ENCODE measurements at regions of chr1 and their contacts with region 1.

Region 1: GRCh38 chr1:61049850-61050540 is 32.4 kb upstream of the NFIA start:
- DNase-seq: peak; percentile 91
- H3K4me3 ChIP-seq: peak overlapping the region; percentile 84 to 92
- H3K27ac ChIP-seq: peak overlapping the region; percentile 54 to 92
- H3K4me1 ChIP-seq: peaks cover 0 to 6% of the 10 kb centered on the region in 2 experiments; a peak in 2 of 4 replicates
- H3K27me3 ChIP-seq: no peaks in the 10 kb centered on the region
- CTCF ChIP-seq: peak; percentile 94
- EP300 ChIP-seq: no peak; a peak in 1 of 4 replicates
- RAD21 ChIP-seq: peak; percentile 81

Region 2: GRCh38 chr1:59971464-59971911 is 1078.5 kb before region 1 on chr1:
- CTCF ChIA-PET with region 1: interaction called, 11 read pairs
- POLR2A ChIA-PET with region 1: no interaction called
- DNase-seq: peak; percentile 88
- H3K4me3 ChIP-seq: peak overlapping the region; percentile 13 to 42; a peak in 3 of 4 replicates
- H3K27ac ChIP-seq: no peak overlapping the region
- H3K4me1 ChIP-seq: peaks cover 0 to 5% of the 10 kb centered on the region in 2 experiments; a peak in 1 of 4 replicates
- H3K27me3 ChIP-seq: no peaks in the 10 kb centered on the region
- CTCF ChIP-seq: peak; percentile 96
- EP300 ChIP-seq: no peak
- RAD21 ChIP-seq: peak; percentile 93

Region 3: GRCh38 chr1:60969971-60970509 is 80.0 kb before region 1 on chr1:
- CTCF ChIA-PET with region 1: interaction called, 25 read pairs
- POLR2A ChIA-PET with region 1: no interaction called
- DNase-seq: peak; percentile 50
- H3K4me3 ChIP-seq: no peak overlapping the region
- H3K27ac ChIP-seq: peak overlapping the region; percentile 44 to 88
- H3K4me1 ChIP-seq: peaks cover 17 to 28% of the 10 kb centered on the region in 2 experiments
- H3K27me3 ChIP-seq: no peaks in the 10 kb centered on the region
- CTCF ChIP-seq: peak; percentile 57
- EP300 ChIP-seq: peak in 1 of 2 experiments; percentile 53; a peak in 1 of 4 replicates
- RAD21 ChIP-seq: peak; percentile 86

Region 4: GRCh38 chr1:60989749-60990713 is 60.0 kb before region 1 on chr1:
- CTCF ChIA-PET with region 1: interaction called, 15 read pairs
- POLR2A ChIA-PET with region 1: interaction called, 4 read pairs
- DNase-seq: peak; percentile 50
- H3K4me3 ChIP-seq: peak overlapping the region; percentile 6 to 21; a peak in 3 of 4 replicates
- H3K27ac ChIP-seq: peak overlapping the region; percentile 90 to 93
- H3K4me1 ChIP-seq: peaks cover 19 to 36% of the 10 kb centered on the region in 2 experiments; a peak in 3 of 4 replicates
- H3K27me3 ChIP-seq: no peaks in the 10 kb centered on the region
- CTCF ChIP-seq: no peak
- EP300 ChIP-seq: peak; percentile 8 to 77; a peak in 3 of 4 replicates
- RAD21 ChIP-seq: no peak

Region 5: DNA sequence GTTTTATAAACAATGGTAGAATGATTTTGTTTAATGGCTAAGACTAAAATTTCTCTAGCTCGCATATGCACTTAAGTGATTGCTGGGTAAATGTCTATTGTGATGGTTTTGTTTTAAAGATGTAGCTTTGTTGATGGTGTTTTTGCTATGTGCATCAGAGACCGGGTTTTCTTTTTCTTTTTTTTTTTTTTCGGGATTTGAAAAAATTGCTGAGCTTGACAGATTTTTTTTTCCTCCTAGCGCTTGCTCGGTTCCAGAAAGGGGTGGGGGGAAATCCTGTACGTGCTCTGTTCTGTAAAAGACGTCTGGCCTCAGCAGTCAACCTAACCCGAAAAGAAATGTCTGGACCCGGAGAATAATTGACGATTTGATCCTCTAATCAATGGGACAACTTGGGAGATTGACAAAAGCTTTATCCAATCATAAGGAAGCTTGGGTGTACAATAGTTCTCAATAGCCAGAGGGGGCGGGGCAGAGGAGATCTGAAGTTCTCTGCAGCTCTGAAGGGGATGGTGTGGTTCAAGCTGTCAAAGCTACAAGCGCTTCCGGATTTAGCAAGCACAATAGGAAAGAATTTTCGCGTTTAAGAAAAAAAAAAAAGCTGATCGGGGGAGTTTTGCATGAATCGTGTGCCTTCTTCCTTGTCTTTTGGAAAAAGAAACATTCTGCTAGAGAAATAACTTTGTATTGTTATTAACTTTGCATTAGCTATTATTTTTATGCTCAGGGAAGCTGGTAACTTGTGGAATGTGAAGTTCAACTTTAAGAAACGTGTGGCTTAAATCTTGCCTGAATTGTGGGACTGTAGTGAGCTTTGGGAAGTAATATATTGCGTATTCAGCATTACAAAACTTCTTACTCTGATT is 27.9 kb after region 1 on chr1:
- CTCF ChIA-PET with region 1: interaction called, 43 read pairs
- POLR2A ChIA-PET with region 1: interaction called, 14 read pairs
- DNase-seq: peak; percentile 85
- H3K4me3 ChIP-seq: peak overlapping the region; percentile 60 to 76
- H3K27ac ChIP-seq: peak overlapping the region; percentile 80 to 98
- H3K4me1 ChIP-seq: peaks cover 31 to 33% of the 10 kb centered on the region in 2 experiments
- H3K27me3 ChIP-seq: no peaks in the 10 kb centered on the region
- CTCF ChIP-seq: no peak
- EP300 ChIP-seq: no peak
- RAD21 ChIP-seq: no peak

Region 6: DNA sequence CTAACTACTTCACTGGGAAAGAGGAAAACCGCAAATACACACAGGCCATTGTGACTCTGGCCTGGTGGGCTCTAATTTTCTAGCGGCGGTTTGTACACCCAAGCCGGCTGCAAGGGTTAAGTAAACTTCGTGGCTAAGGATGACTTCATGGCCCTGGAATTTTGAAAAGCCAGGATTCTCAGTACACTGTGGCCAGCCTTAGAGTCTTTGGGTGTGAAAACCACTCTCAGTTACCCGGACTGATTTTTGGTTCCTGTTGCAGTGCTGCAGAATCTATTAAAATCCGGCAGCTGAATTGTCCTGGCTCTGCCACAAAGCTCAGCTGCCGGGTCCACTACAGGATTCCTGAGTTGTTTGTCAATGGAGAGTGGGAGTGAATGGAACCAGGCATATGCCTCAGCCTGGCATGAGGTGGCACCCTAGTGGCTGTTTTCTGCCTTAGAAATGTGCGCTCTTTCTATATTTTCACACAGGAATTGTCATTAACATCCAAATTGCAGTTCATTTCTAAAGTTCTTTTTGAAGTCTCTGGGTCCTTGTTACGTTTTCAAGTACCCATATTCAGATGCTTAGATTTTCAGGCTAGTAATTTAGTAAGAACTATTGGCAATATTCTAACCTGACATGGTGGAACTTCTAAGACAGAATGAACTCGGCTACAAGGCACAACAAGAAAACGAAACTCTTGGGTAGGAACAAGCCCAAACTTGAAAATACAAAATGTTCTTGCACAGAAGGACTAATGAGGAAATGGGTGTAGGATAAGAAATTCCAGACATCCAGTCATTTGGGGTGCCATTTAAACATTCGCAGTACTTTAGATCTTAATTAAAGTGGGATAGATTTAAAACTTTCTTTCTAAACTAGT is 288.2 kb after region 1 on chr1:
- CTCF ChIA-PET with region 1: interaction called, 24 read pairs
- POLR2A ChIA-PET with region 1: interaction called, 6 read pairs
- DNase-seq: peak; percentile 73
- H3K4me3 ChIP-seq: peak overlapping the region in 1 of 2 experiments; percentile 18; a peak in 1 of 4 replicates
- H3K27ac ChIP-seq: peak overlapping the region; percentile 59 to 61
- H3K4me1 ChIP-seq: peaks cover 16 to 25% of the 10 kb centered on the region in 2 experiments; a peak in 3 of 4 replicates
- H3K27me3 ChIP-seq: no peaks in the 10 kb centered on the region
- CTCF ChIP-seq: peak; percentile 88
- EP300 ChIP-seq: 0 out of 4 replicates have a peak, but pooled peaks of 1 of the 2 experiments have one; percentile 29
- RAD21 ChIP-seq: peak; percentile 98